ENCODE measurements at regions of chr2 and their contacts with region 1.

Region 1: GRCh38 chr2:30711646-30712085 is 95.6 kb downstream of the CAPN13 start:
- DNase-seq: peak; percentile 93
- H3K4me3 Mint-ChIP-seq: no peak overlapping the region
- H3K27ac Mint-ChIP-seq: no peak overlapping the region
- H3K4me1 Mint-ChIP-seq: peaks cover 6% of the 10 kb centered on the region
- H3K27me3 Mint-ChIP-seq: no peaks in the 10 kb centered on the region

Region 2: DNA sequence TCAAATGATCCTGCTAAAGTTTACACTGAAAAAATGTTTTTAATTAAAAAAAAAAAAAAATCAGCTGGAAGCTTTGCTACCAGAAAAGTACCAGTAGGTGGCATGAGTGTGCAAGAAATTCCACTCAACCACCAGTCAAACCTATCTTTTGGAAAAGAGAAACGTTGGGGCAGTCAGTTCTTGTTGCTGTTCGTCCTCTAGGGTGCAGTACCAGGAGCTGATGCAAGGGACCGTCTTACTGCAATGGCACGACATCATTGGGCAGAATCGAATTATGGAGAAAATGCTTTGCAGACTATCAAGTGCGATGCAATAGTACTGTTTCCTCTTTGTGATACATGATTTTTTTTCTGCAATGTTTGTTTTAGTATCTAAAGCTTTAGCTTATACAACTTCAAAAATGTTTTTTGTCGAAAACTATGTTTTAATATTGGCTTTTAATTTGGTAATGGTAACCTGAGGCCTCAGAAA is 546.6 kb before region 1 on chr2:
- CTCF ChIA-PET with region 1: interaction called, 252 read pairs
- POLR2A ChIA-PET with region 1: interaction called, 3 read pairs
- DNase-seq: peak; percentile 83
- H3K4me3 Mint-ChIP-seq: no peak overlapping the region
- H3K27ac Mint-ChIP-seq: no peak overlapping the region
- H3K4me1 Mint-ChIP-seq: peaks cover 6% of the 10 kb centered on the region
- H3K27me3 Mint-ChIP-seq: no peaks in the 10 kb centered on the region

Region 3: DNA sequence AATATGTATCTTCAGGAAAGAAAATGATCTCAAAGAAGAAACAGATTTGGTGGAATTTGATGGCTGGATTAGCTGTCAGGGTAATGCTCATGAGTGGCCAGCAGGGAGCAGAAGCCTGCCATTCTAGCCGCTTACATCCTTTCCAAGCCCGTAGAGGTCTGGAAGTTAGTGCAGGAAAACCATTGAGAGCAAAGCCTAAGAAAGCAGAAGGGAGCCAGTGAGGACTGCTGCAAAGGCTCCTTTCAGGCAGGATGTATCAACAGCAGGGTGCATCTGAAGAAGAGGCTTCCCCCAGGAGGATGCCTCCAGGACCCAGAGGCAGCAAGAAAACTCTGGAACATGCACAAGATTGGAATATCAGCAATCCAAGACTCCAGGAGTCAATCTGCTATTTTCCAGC is 503.2 kb before region 1 on chr2:
- CTCF ChIA-PET with region 1: interaction called, 31 read pairs
- POLR2A ChIA-PET with region 1: no interaction called
- DNase-seq: peak; percentile 42
- H3K4me3 Mint-ChIP-seq: no peak overlapping the region
- H3K27ac Mint-ChIP-seq: peak overlapping the region; percentile 68
- H3K4me1 Mint-ChIP-seq: peaks cover 20% of the 10 kb centered on the region
- H3K27me3 Mint-ChIP-seq: peaks cover 3% of the 10 kb centered on the region

Region 4: DNA sequence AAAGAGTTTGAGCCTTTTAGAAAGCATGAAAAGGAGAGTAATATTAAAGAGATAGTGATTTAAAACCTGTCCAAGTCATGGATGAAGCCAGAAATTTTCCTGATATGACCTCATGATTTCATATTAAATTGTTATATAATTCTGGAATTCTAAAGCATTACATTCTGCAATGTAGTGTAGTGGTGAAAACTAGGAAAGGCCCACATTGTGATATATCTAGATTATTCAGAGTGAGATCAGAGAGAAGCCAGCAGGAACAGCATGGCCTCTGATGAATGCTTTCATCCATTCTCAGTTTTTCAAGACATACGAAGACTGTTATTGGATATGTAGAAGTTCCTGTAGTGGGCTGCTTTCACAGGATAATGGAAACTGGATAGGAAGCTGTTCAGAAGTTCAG is 165.8 kb before region 1 on chr2:
- CTCF ChIA-PET with region 1: no interaction called
- POLR2A ChIA-PET with region 1: no interaction called
- DNase-seq: no peak
- H3K4me3 Mint-ChIP-seq: no peak overlapping the region
- H3K27ac Mint-ChIP-seq: no peak overlapping the region
- H3K4me1 Mint-ChIP-seq: peaks cover 11% of the 10 kb centered on the region
- H3K27me3 Mint-ChIP-seq: no peaks in the 10 kb centered on the region

Region 5: DNA sequence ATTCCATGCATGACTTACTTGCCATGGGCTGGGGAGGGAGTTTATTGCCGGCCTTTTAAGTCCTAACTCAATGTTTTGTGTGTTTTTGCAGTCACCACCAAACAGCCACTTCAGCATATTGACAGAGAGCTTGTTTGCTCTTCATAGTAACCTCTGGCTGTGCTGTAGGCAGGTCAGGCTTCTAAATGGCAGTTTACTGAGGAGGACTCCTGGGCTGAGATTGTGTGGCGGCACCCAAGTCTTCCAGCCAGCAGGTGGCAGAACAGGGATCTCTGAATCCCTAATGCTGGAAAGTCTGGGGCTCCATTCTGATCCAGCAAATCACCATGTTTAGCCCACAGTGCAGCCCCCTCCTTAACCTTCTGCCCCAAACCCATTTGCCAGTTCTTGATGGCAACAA is 25.7 kb before region 1 on chr2:
- CTCF ChIA-PET with region 1: interaction called, 19 read pairs
- POLR2A ChIA-PET with region 1: no interaction called
- DNase-seq: no peak
- H3K4me3 Mint-ChIP-seq: no peak overlapping the region
- H3K27ac Mint-ChIP-seq: no peak overlapping the region
- H3K4me1 Mint-ChIP-seq: no peaks in the 10 kb centered on the region
- H3K27me3 Mint-ChIP-seq: no peaks in the 10 kb centered on the region

Region 6: GRCh38 chr2:31170071-31170698 is 458.5 kb after region 1 on chr2:
- CTCF ChIA-PET with region 1: interaction called, 16 read pairs
- POLR2A ChIA-PET with region 1: no interaction called
- DNase-seq: peak; percentile 57
- H3K4me3 Mint-ChIP-seq: no peak overlapping the region
- H3K27ac Mint-ChIP-seq: no peak overlapping the region
- H3K4me1 Mint-ChIP-seq: peaks cover under 1% of the 10 kb centered on the region
- H3K27me3 Mint-ChIP-seq: peaks cover 5% of the 10 kb centered on the region